ENCODE measurements at regions of chr9 and their contacts with region 1.

Region 1: DNA sequence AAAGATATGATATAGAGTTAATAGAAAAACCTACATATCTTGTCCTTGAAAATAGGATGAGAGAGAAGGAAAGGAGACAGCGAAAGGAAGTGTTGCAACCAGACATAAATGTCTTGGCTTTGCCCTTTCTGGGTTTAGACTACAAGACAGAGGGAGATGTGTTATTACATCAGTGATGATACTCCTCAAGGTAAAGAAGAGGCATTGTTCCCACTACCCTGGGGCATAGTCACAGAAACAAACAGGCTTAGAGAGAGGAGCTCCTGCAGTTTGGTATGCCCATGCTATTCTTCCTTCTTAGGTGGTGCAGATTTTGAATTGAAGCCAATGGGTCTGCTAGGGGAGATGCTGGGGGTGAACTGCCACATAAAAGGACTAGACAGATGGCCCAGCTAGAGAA is 166.8 kb upstream of the RFX3 start:
- DNase-seq: no peak
- H3K4me3 ChIP-seq: no peak overlapping the region
- H3K27ac ChIP-seq: no peak overlapping the region
- H3K4me1 ChIP-seq: no peaks in the 10 kb centered on the region
- H3K27me3 ChIP-seq: no peaks in the 10 kb centered on the region
- CTCF ChIP-seq: no peak

Region 2: DNA sequence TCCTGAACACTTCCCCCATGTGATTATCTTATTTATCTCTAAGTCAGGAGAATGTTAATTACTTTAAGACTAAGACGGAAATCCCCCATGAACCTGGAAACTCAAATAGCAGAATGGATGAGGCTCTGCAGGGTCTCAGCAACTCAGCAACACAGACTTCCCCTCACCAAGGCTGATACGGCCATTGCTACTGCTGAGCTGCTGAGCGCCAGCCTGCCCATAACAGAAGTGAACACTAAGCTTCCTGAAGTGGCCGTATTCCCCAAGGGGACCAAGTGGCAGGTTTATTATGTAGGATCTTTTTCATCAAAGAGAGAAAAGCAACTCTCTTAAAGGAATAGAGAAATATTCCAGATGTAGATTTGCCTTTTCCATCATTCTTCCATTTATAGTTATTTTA is 477.9 kb before region 1 on chr9:
- intact Hi-C with region 1: loop called (anchors 5 kb)
- DNase-seq: no peak
- H3K4me3 ChIP-seq: no peak overlapping the region
- H3K27ac ChIP-seq: no peak overlapping the region
- H3K4me1 ChIP-seq: no peaks in the 10 kb centered on the region
- H3K27me3 ChIP-seq: no peaks in the 10 kb centered on the region
- CTCF ChIP-seq: no peak

Region 3: GRCh38 chr9:3828250-3828908 is 135.8 kb after region 1 on chr9:
- intact Hi-C with region 1: no loop called
- DNase-seq: no peak
- H3K4me3 ChIP-seq: no peak overlapping the region
- H3K27ac ChIP-seq: no peak overlapping the region
- H3K4me1 ChIP-seq: no peaks in the 10 kb centered on the region
- H3K27me3 ChIP-seq: no peaks in the 10 kb centered on the region
- CTCF ChIP-seq: no peak